Dorsolateral prefrontal cortex (tissue), 120 donors: ENCODE measurements at regions of chr1 and their contacts with region 1.

Region 1: DNA sequence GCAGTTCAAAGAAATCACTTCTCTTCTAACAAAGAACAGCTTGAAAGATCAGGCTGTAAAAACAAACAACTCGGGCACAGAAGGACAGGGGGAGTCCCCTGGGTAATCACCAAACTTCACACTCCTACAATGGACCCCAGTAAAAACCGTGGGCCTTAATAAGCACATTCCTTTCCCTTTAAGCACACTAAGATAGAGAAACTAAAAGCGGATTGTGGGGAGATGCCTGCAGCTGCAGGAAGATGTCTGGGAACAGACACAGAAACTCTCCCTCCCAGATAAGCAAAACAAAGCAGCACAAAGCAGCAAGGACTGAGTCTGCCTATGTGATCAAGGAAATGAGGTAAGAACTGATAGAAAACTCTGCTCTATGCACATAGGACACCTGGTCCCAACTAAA is 37.6 kb upstream of the CTBS start:
- DNase-seq: no peak
- H3K4me3 ChIP-seq: peak overlapping the region in 1 of 59 donors; percentile 4
- H3K27ac ChIP-seq: peak overlapping the region in 51 of 59 donors; percentile 1 to 86 (median 67)
- H3K27me3 ChIP-seq: no peaks in the 10 kb centered on the region
- CTCF ChIP-seq: no peak

Region 2: DNA sequence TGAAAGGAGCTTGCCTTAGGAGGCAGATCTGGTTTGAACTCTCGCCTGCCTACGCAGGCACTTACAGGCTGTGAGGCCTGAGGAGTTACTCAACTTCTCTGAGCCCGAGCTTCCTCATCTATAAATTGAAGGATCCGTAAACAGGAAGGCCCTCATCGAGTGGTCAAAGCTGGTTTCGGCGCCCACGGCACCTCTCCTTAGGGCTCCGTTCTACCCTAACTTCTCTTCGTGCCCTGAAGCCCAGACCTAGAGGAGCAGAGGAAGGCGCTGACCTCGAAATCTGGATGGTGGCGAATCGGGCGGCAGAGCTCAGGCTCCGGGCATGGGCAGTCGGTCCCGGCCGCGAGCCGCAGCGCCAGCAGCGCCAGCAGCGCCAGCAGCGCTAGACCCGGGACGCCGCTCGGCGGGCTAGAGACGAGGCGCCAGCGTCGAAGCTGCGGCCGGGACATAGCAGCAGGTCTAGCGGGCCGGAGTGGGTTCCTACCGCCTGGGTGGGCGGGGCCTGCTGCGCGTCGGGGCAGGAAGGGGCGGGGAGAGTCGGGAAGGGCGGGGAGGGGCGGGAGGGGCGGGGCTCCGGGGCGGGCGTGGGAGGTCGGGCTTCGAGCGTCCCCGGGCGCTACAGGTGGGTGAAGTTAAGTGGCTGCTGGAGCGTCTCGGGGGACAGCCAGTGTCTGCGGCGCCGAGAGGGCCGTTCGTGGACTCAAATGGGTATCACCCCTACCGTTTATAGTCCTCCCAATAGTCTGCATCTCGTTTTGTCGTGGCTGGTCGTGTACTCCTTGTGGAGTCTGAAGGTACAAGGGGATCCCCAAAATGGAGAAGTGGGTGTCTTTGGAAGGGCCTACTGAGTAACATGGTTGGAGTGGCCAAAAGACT is 37.6 kb before region 1 on chr1 and contains the start of gene CTBS:
- intact Hi-C with region 1: loop called in 1 of 2 experiments (anchors 2 kb)
- DNase-seq: peak; percentile 64 to 85 (median 78)
- H3K4me3 ChIP-seq: peak within 1 kb of the TSS; percentile 50 to 95 (median 78)
- H3K27ac ChIP-seq: peak within 1 kb of the TSS; percentile 54 to 98 (median 93)
- H3K27me3 ChIP-seq: no peaks in the 10 kb centered on the region
- CTCF ChIP-seq: peak in 7 of 56 donors; percentile 3 to 47 (median 5)
- total RNA-seq, gene CTBS: 4.5 to 15.6 (median 8.4) TPM

Region 3: GRCh38 chr1:85465099-85465785 is 853.4 kb after region 1 on chr1 and contains the start of gene DDAH1:
- intact Hi-C with region 1: no loop called
- DNase-seq: peak in 8 of 10 donors; percentile 36 to 74 (median 49)
- H3K4me3 ChIP-seq: peak within 1 kb of the TSS; percentile 55 to 85 (median 72)
- H3K27ac ChIP-seq: peak within 1 kb of the TSS in 52 of 59 donors; percentile 24 to 89 (median 78)
- H3K27me3 ChIP-seq: no peaks in the 10 kb centered on the region
- CTCF ChIP-seq: peak in 2 of 56 donors; percentile 12 to 13
- total RNA-seq, gene DDAH1: 76.1 to 218 (median 142) TPM